Endothelial cell of umbilical vein (primary cell): ENCODE measurements at regions of chr11 and their contacts with region 1.

Region 1: DNA sequence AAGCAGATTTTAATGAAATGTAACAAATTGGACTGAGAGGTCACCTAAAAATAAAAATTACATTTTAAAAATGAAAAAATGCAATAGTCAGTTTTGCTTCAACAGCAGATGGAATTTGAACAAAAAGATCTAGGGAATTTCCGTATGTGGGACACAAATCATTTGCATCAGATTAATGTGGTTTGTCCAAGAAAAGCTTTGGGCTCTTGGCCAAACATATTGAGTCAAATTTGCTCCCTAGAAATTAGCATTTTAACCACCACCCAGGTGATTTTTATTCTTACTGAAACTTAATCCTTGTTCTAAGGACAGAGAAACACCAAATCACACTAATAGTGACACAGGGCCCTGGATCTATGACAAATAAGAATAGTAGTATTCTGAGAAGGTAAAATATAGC is 1477.8 kb downstream of the FAM181B start:
- DNase-seq: no peak
- H3K4me3 ChIP-seq: no peak overlapping the region
- H3K27ac ChIP-seq: no peak overlapping the region
- H3K4me1 ChIP-seq: no peaks in the 10 kb centered on the region
- H3K27me3 ChIP-seq: no peaks in the 10 kb centered on the region
- CTCF ChIP-seq: no peak
- POLR2A ChIP-seq: no peak

Region 2: DNA sequence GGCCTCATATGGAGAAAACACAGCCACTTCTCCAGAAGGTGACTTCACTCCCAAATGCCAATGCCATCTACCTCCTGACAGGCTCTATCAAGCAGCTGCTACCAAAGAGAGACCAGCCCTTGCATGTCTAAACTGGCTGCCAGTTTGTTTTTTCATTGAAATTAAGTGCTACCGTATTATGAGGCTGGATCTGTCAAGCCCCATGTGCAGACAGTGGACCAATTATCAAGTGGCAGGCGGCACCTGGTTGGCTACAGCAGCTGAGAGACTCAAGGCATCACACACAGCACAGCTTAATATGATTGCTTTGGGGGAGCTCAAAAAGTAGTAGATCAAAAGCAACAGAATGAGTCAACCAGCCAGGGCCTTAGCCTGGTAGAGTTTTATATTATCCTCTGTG is 522.1 kb before region 1 on chr11:
- CTCF ChIA-PET with region 1: no interaction called
- POLR2A ChIA-PET with region 1: no interaction called
- dilution Hi-C with region 1: no loop called
- intact Hi-C with region 1: loop called (anchors 5 kb)
- DNase-seq: no peak
- H3K4me3 ChIP-seq: no peak overlapping the region
- H3K27ac ChIP-seq: no peak overlapping the region
- H3K4me1 ChIP-seq: no peaks in the 10 kb centered on the region
- H3K27me3 ChIP-seq: no peaks in the 10 kb centered on the region
- CTCF ChIP-seq: no peak
- POLR2A ChIP-seq: no peak